ENCODE measurements at regions of chr10 and their contacts with region 1.

Region 1: DNA sequence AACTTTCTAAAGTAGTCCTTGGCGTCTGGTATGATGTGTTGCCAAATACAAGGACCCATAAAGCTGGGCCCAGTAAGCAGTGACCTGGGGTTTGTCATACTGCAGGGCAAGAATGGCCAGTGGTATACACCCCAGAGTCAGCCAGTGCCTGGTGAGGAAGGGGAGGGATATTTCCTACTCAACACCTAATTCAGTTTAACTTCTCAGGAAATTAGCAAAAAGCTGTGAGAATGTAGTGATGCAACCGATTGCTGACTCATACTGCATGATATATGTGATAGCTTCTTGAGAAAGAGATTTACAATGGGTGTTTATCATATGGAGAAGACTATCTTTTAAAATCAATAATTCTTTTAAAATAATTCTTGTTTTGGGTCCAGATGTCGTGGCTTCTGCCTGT is 889.3 kb upstream of the CELF2 start:
- DNase-seq: no peak
- ATAC-seq: no peak
- H3K4me3 ChIP-seq: no peak overlapping the region
- H3K4me3 Mint-ChIP-seq: no peak overlapping the region
- H3K27ac ChIP-seq: no peak overlapping the region
- H3K27ac Mint-ChIP-seq: no peak overlapping the region
- H3K4me1 ChIP-seq: no peaks in the 10 kb centered on the region
- H3K4me1 Mint-ChIP-seq: no peaks in the 10 kb centered on the region
- H3K27me3 ChIP-seq: peaks cover 0 to 3% of the 10 kb centered on the region in 2 experiments
- H3K27me3 Mint-ChIP-seq: peaks cover 2 to 5% of the 10 kb centered on the region in 2 donors

Region 2: DNA sequence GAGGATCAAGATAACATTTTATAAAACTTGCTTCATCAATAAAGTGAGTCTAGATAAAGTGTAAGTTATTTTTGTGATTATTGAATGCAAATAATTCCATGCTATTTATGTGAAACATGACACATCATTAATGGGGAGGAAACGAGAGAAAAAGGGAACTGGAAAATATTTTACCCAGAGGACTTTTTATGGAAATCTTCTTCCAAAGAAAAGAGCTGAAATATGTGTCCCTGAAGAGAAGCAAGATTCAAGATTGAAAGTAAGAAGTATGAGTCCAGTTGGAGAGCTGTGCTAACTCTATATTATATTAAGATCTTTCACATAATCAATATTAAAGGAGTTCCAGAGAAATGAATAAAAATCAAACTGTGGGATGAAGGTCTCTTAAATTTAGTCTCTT is 712.1 kb before region 1 on chr10:
- CTCF ChIA-PET with region 1: interaction called in 1 of 2 experiments, 10 read pairs
- POLR2A ChIA-PET with region 1: no interaction called
- DNase-seq: no peak
- ATAC-seq: no peak
- H3K4me3 ChIP-seq: no peak overlapping the region
- H3K4me3 Mint-ChIP-seq: no peak overlapping the region
- H3K27ac ChIP-seq: no peak overlapping the region
- H3K27ac Mint-ChIP-seq: no peak overlapping the region
- H3K4me1 ChIP-seq: no peaks in the 10 kb centered on the region
- H3K4me1 Mint-ChIP-seq: no peaks in the 10 kb centered on the region
- H3K27me3 ChIP-seq: no peaks in the 10 kb centered on the region
- H3K27me3 Mint-ChIP-seq: peaks cover 6 to 7% of the 10 kb centered on the region in 2 donors

Region 3: DNA sequence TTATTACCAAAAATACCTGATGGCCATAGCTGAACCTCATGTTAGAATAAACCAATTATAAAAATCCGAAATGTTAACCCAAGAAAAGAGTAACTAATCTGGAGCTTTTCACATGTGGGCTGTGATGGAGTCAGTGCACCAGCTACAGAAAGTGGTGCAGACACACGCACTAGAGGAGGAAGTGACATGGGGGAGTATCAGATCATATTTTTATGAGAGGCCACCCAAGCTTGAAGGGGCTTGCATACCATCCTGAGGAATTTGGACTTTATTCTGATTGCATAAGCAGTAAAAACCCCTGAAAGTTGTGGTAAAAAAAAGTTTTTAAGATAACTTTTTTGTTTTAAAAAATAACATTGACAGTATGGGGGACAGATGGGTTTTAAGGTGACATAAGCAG is 259.2 kb before region 1 on chr10:
- CTCF ChIA-PET with region 1: no interaction called
- POLR2A ChIA-PET with region 1: no interaction called
- DNase-seq: no peak
- ATAC-seq: no peak
- H3K4me3 ChIP-seq: no peak overlapping the region
- H3K4me3 Mint-ChIP-seq: no peak overlapping the region
- H3K27ac ChIP-seq: no peak overlapping the region
- H3K27ac Mint-ChIP-seq: no peak overlapping the region
- H3K4me1 ChIP-seq: no peaks in the 10 kb centered on the region
- H3K4me1 Mint-ChIP-seq: no peaks in the 10 kb centered on the region
- H3K27me3 ChIP-seq: no peaks in the 10 kb centered on the region
- H3K27me3 Mint-ChIP-seq: peaks cover 0 to 4% of the 10 kb centered on the region in 2 donors

Region 4: GRCh38 chr10:10014846-10015245 is 113.5 kb before region 1 on chr10:
- CTCF ChIA-PET with region 1: no interaction called
- POLR2A ChIA-PET with region 1: no interaction called
- DNase-seq: no peak
- ATAC-seq: no peak
- H3K4me3 ChIP-seq: no peak overlapping the region
- H3K4me3 Mint-ChIP-seq: no peak overlapping the region
- H3K27ac ChIP-seq: no peak overlapping the region
- H3K27ac Mint-ChIP-seq: no peak overlapping the region
- H3K4me1 ChIP-seq: no peaks in the 10 kb centered on the region
- H3K4me1 Mint-ChIP-seq: no peaks in the 10 kb centered on the region
- H3K27me3 ChIP-seq: no peaks in the 10 kb centered on the region
- H3K27me3 Mint-ChIP-seq: peaks cover 0 to 6% of the 10 kb centered on the region in 2 donors

Measured in T-cell (primary cell).